GM10248 (cell line): ENCODE measurements at regions of chr17 and their contacts with region 1.

Region 1: GRCh38 chr17:62109378-62109902 is 44.4 kb upstream of the MED13 start:
- DNase-seq: peak; percentile 84
- CTCF ChIP-seq: peak; percentile 98

Region 2: DNA sequence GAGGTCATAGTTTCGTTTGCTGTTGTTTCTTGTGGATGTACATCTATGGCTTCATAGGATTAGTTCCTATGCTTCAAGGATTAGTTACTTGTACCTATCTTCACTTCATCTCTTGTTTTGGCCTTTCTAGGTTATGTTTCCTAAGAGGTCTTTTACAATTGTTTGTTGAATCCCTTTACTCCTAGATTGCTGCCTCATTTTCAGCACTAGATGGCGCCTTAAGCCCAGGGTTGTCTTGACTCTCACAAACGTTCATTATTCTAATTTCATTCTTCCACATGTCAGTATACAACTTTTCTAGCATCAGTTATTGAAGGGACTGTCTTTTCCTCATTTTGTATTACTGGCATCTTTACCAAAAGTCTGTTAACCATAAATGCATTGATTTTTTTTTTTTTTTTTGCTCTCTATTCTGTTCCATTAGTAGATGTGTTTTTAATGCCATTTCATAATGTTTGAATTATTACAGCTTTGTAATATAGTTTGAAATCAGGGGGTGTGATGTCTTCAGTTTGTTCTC is 473.5 kb before region 1 on chr17:
- CTCF ChIA-PET with region 1: interaction called, 22 read pairs
- POLR2A ChIA-PET with region 1: no interaction called
- DNase-seq: peak; percentile 22
- CTCF ChIP-seq: peak; percentile 71

Region 3: GRCh38 chr17:61966191-61966590 is 143.2 kb before region 1 on chr17:
- CTCF ChIA-PET with region 1: interaction called, 14 read pairs
- POLR2A ChIA-PET with region 1: no interaction called
- DNase-seq: no peak
- CTCF ChIP-seq: no peak

Region 4: GRCh38 chr17:62017610-62018261 is 91.7 kb before region 1 on chr17:
- CTCF ChIA-PET with region 1: no interaction called
- POLR2A ChIA-PET with region 1: no interaction called
- DNase-seq: no peak
- CTCF ChIP-seq: no peak

Region 5: GRCh38 chr17:62052757-62053338 is 56.6 kb before region 1 on chr17:
- CTCF ChIA-PET with region 1: interaction called, 11 read pairs
- POLR2A ChIA-PET with region 1: no interaction called
- DNase-seq: no peak
- CTCF ChIP-seq: no peak

Region 6: GRCh38 chr17:62065598-62066468 is 43.6 kb before region 1 on chr17:
- CTCF ChIA-PET with region 1: interaction called, 22 read pairs
- POLR2A ChIA-PET with region 1: interaction called, 4 read pairs
- DNase-seq: peak; percentile 98
- CTCF ChIP-seq: peak; percentile 68

Region 7: GRCh38 chr17:62093188-62094155 is 16.0 kb before region 1 on chr17:
- CTCF ChIA-PET with region 1: interaction called, 174 read pairs
- POLR2A ChIA-PET with region 1: no interaction called
- DNase-seq: peak; percentile 75
- CTCF ChIP-seq: no peak

Region 8: DNA sequence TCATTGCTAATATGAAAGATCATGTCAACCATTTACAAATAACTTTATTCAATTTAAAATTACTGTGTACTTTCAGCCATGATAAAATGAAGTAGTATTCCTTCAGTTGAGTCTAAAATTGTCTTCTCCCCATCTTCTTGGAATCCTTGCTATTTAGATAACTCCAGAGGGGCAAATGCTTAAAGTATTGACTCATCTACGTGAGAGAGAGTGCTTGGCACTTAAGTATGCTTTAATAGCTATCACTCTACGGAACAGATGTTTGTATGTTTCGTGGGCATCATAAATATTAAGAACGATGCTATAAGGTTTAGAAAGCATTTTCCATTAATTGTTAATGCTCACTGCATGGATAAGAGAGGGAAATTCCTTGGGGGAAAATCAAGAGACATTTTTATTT is 25.0 kb after region 1 on chr17:
- CTCF ChIA-PET with region 1: interaction called, 12 read pairs
- POLR2A ChIA-PET with region 1: no interaction called
- DNase-seq: no peak
- CTCF ChIP-seq: no peak

Region 9: GRCh38 chr17:62194401-62194800 is 85.0 kb after region 1 on chr17:
- CTCF ChIA-PET with region 1: no interaction called
- POLR2A ChIA-PET with region 1: no interaction called
- DNase-seq: no peak
- CTCF ChIP-seq: no peak